Pancreas (tissue), 10 donors: ENCODE measurements at regions of chr1 and their contacts with region 1.

Region 1: DNA sequence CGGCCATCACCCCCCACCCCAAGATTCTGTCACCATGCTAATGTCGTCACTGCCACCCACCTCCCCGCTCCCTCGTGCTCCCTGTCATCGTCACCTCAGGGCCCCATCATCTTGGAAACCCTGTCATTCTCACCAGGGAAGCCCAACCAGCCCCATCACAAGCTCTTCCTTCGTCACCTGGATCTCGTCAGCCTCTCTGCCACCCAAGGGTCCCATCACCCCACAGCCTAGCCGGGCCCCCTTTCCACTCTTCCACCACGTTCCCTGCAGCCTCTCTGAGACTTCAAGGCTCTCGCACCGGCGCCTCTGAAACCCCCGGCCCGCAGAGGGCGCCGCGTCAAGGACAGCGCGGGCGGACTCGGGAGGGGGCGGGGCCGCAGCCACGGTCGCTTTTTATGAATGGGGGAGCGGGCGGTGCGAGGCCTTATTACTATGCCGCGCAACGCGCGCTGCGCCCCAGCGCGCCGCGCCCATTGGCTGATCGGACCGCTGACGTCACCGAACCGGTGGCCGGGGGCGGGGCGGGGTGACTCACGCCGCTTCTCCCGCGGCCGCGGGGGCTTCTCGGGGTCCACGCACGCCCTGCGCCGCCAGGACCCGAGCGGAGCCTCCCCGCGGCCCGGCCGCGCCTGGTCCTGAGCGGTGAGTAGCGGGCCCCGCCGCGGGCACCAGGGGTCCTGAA is at the start of gene GPR3:
- DNase-seq: peak; percentile 78 to 92 (median 88)
- ATAC-seq: peak; percentile 81 to 90 (median 88)
- H3K4me3 ChIP-seq: peak within 1 kb of the TSS; percentile 7 to 59 (median 18)
- H3K27ac ChIP-seq: no peak within 1 kb of the TSS
- H3K4me1 ChIP-seq: peaks cover 0 to 5% (median 4%) of the 10 kb centered on the region in 3 donors
- H3K27me3 ChIP-seq: no peaks in the 10 kb centered on the region
- CTCF ChIP-seq: peak in 1 of 4 donors; percentile 18
- total RNA-seq, gene GPR3: 0.09 to 0.28 (median 0.21) TPM in 3 of 6 donors, not detected in the others

Region 2: GRCh38 chr1:25562101-25562927 is 1829.9 kb before region 1 on chr1:
- intact Hi-C with region 1: no loop called
- DNase-seq: no peak
- ATAC-seq: peak in 3 of 4 donors; percentile 11 to 42 (median 30)
- H3K4me3 ChIP-seq: no peak overlapping the region
- H3K27ac ChIP-seq: no peak overlapping the region
- H3K4me1 ChIP-seq: no peaks in the 10 kb centered on the region
- H3K27me3 ChIP-seq: no peaks in the 10 kb centered on the region
- CTCF ChIP-seq: no peak

Region 3: DNA sequence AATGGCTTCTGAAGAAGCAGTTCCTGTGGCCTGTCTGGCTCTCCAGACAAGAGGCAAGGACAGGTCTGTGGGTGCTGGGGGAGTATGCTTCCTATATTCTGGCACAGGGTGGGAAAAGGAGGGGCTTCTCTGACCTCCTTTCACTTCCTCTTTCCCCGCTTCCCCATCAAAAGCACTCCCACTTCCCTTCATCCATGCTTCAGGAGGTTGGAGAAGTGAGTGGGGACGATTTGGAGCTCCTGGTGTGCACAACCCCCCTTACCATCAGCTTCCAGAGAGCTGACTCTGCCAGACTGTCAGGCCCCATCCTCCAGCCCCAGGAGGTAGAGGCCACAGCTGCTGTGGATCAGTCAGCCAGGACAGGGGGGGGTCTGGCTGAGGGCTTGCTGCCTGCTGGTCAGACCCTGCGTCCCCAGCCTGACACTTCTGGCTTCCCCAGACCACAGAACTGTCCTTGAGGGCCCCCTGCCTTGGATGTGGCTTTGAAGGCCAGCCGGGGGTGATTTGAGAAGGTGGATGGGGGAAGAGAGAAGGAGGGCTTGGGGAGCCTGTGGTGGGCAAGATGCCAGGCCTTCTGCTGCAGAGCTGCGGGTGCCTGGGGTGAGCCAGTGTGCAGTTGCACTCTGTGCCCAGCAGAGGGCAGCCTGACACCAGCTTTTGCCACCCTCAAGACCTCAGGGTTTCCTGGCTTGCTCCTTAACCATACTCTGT is 91.7 kb before region 1 on chr1:
- intact Hi-C with region 1: loop called (anchors 2 to 10 kb)
- DNase-seq: peak; percentile 65 to 92 (median 86)
- ATAC-seq: peak; percentile 88 to 95 (median 91)
- H3K4me3 ChIP-seq: no peak overlapping the region
- H3K27ac ChIP-seq: peak overlapping the region in 1 of 4 donors; percentile 21
- H3K4me1 ChIP-seq: no peaks in the 10 kb centered on the region
- H3K27me3 ChIP-seq: no peaks in the 10 kb centered on the region
- CTCF ChIP-seq: peak; percentile 97 to 99 (median 98)

Region 4: GRCh38 chr1:27332536-27333281 is 59.5 kb before region 1 on chr1:
- intact Hi-C with region 1: loop called in 1 of 3 experiments (anchors 10 kb)
- DNase-seq: peak in 2 of 6 donors; percentile 58 to 73
- ATAC-seq: peak; percentile 72 to 90 (median 78)
- H3K4me3 ChIP-seq: no peak overlapping the region
- H3K27ac ChIP-seq: no peak overlapping the region
- H3K4me1 ChIP-seq: no peaks in the 10 kb centered on the region
- H3K27me3 ChIP-seq: no peaks in the 10 kb centered on the region
- CTCF ChIP-seq: peak; percentile 70 to 86 (median 80)

Region 5: GRCh38 chr1:27357281-27358037 is 34.8 kb before region 1 on chr1:
- intact Hi-C with region 1: loop called in 1 of 3 experiments (anchors 5 kb)
- DNase-seq: peak; percentile 72 to 94 (median 84)
- ATAC-seq: peak; percentile 86 to 93 (median 90)
- H3K4me3 ChIP-seq: peak overlapping the region in 3 of 4 donors; percentile 18 to 38 (median 38)
- H3K27ac ChIP-seq: no peak overlapping the region
- H3K4me1 ChIP-seq: peaks cover 0 to 4% (median 0%) of the 10 kb centered on the region in 3 donors
- H3K27me3 ChIP-seq: no peaks in the 10 kb centered on the region
- CTCF ChIP-seq: peak; percentile 99 to 100 (median 100)

Region 6: DNA sequence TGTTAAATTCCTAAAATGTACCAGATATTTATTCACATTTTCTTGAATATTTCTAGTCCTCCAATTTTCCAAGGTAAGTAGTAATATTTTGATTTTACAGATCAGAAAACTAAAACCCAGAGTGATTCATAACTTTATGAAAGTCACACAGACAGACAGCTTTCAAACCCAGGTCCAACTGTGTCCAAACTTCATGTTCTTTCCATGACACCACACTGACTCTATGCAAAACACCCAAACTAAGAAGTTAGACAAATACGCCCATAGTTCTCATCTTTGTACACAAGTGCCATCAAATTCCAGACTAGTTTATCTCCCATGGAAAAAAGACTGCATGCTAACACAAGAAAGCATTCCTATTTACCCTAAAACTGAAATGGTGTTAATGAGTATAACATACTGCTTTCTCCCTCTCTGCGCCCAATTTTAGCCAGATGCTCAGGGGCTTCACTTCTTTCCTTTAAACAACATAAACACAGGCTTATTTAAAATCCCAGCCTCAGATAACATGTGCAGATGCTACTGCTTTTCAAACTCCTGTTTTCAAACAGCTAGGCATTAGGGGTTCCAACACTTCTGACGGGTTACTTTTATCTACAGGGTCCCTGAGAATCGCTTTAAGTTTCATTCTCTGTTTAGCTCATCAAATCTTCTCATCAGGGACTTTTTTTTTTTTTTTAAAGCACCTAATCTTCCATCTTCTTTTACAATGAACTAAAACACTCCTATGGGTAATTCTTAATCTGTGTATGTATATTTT is 53.1 kb after region 1 on chr1:
- intact Hi-C with region 1: no loop called
- DNase-seq: no peak
- ATAC-seq: no peak
- H3K4me3 ChIP-seq: no peak overlapping the region
- H3K27ac ChIP-seq: no peak overlapping the region
- H3K4me1 ChIP-seq: no peaks in the 10 kb centered on the region
- H3K27me3 ChIP-seq: no peaks in the 10 kb centered on the region
- CTCF ChIP-seq: no peak

Region 7: DNA sequence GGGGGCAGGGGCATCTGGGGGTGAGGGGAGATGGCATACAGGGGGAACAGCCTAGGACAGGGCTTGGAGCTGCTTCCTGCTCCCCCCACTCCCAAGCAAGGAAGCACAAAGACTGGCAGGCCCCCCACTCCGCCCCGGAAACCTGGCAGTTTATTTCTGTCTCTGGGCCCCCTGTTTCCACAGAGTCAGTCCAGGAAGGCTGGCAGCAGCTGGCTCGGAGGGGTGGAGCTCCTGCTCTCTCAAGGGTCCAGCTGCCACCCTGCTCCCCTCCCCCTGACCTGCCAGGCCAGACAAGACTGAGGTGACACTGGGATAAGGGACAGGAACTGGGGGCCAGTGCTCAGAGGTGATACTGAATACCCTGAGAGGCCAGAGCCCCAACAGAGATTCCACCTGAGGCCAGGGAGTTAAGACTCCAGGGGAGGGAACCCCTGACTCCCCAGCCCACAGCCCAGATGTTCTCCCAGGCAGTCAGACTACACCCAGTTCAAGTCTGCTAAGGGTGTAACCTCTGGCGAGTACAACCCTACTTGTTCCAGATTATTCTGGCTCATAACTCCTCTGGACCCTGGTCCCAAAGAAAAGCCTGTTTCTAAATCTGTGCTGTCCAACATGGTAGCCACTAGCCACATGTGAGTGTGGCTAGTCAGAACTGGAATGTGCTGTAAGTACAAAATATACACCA is 185.4 kb after region 1 on chr1:
- intact Hi-C with region 1: no loop called
- DNase-seq: peak in 1 of 6 donors; percentile 62
- ATAC-seq: no peak
- H3K4me3 ChIP-seq: no peak overlapping the region
- H3K27ac ChIP-seq: no peak overlapping the region
- H3K4me1 ChIP-seq: peaks cover 22 to 31% (median 27%) of the 10 kb centered on the region in 3 donors
- H3K27me3 ChIP-seq: no peaks in the 10 kb centered on the region
- CTCF ChIP-seq: no peak

Region 8: DNA sequence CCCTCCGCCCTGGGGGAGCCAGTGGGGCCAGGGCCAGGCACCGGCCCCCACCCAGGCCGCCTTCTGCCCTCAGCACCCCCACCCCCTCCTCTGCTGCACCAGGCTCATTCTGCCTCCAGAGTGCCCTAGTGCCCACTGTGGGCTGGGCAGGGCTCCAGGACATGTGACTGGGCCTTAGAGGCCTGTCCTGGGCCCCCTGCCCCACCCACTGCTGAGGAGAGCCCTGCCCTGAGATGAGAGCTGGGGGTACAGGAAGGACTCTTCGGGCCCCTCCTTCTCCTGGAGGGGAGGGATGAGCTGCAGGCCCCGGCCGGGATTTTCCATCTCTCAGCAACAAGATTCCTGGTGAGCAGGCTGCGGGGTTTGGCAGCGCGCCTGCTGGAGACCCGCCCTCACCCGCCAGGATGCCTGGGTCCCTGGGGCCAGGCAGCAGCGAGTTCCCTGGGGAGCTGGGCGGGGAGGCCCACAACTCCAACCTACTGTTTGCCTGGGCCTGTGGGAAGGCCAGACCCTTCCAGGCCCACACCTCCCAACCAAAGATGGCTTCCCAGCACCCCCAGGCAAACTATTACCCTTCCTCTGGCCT is 197.7 kb after region 1 on chr1:
- intact Hi-C with region 1: no loop called
- DNase-seq: peak in 1 of 6 donors; percentile 67
- ATAC-seq: peak; percentile 14 to 48 (median 24)
- H3K4me3 ChIP-seq: no peak overlapping the region
- H3K27ac ChIP-seq: no peak overlapping the region
- H3K4me1 ChIP-seq: no peaks in the 10 kb centered on the region
- H3K27me3 ChIP-seq: no peaks in the 10 kb centered on the region
- CTCF ChIP-seq: no peak